Dorsolateral prefrontal cortex (tissue), 120 donors: ENCODE measurements at regions of chr5 and their contacts with region 1.

Region 1: GRCh38 chr5:128844354-128844923 is 120.8 kb upstream of the SLC27A6 start:
- DNase-seq: no peak
- H3K4me3 ChIP-seq: no peak overlapping the region
- H3K27ac ChIP-seq: no peak overlapping the region
- H3K27me3 ChIP-seq: no peaks in the 10 kb centered on the region
- CTCF ChIP-seq: peak; percentile 51 to 89 (median 67)

Region 2: DNA sequence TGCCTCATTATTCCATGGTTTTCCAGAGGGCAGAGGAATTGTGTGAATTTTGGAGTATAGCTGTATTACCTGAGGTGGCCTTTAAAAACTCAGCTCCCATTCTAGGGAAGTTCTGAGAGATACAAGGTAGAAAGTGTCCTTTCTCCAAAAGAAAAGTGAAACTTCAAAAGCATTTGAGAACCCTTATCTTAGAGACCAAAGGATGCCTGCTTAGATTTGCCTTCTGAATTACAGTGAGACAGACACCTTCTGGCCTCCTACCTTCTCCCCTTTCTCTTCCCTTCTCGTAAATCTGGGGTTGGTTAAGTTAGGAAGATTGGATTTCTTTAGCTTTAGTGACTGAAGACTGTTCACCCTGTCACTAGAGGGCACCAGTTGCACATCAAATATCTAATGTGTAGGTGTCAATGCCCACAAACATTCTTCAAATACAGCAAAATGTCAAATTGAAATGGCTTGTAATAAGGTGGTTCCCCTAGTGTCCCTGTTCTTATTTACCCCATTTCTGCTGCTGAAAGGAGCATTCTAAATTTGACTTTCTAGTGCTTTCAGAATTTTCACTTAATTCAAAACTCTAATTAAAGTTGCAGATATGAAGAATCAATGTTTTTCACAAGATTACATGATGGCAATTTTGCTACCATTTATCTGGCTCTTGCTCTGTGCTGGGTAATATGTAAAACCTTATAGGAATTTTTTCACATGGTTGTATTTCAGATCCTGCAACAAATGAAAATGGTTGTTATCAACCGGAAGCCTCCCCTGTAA is 1280.3 kb before region 1 on chr5:
- intact Hi-C with region 1: loop called (anchors 5 to 10 kb)
- DNase-seq: peak in 2 of 10 donors; percentile 24 to 52
- H3K4me3 ChIP-seq: no peak overlapping the region
- H3K27ac ChIP-seq: no peak overlapping the region
- H3K27me3 ChIP-seq: peaks cover 0 to 7% (median 0%) of the 10 kb centered on the region in 45 donors
- CTCF ChIP-seq: peak; percentile 46 to 85 (median 71)

Region 3: DNA sequence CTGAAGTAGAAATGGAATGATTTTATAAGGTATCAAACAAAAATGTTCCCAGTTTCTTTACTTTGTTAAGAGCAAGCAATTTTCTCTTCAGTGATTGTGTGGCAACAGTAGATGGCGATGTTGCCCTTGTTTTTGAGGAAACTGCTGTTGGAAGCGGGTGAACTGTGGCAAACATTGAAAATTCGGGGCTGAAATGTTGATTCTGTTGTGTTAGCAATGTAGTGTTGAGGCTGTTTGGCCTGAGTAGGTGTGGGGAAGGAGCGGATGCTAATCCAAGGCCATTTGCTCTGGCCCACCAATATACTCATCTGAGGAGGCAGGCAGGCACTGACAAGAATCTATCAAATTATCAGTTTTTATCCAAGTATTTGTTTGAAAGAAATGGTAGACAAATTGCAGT is 631.1 kb before region 1 on chr5:
- intact Hi-C with region 1: loop called (anchors 2 kb)
- DNase-seq: peak in 6 of 10 donors; percentile 28 to 67 (median 45)
- H3K4me3 ChIP-seq: no peak overlapping the region
- H3K27ac ChIP-seq: no peak overlapping the region
- H3K27me3 ChIP-seq: no peaks in the 10 kb centered on the region
- CTCF ChIP-seq: peak; percentile 50 to 95 (median 85)

Region 4: DNA sequence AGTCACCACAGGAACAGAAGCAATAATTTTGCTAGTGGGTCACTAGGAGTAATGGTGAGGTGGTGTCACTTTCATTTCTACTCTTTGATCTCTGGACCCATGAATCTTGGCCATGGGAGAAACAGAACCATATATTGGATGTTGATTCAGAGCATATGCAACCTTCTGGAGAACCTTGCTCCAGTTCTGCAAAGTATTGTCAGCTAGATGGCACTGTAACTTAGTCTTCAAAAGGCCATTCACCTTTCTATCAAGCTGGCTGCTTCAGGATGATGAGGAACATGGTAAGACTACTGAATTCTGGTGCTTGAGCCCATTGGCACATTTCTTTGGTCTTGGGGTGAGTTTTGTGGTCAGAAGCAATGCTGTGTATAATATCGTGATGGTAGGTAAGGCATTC is 177.3 kb before region 1 on chr5:
- intact Hi-C with region 1: loop called in 1 of 2 experiments (anchors 5 kb)
- DNase-seq: no peak
- H3K4me3 ChIP-seq: no peak overlapping the region
- H3K27ac ChIP-seq: no peak overlapping the region
- H3K27me3 ChIP-seq: peaks cover 0 to 7% (median 0%) of the 10 kb centered on the region in 45 donors
- CTCF ChIP-seq: peak in 48 of 56 donors; percentile 10 to 65 (median 39)

Region 5: GRCh38 chr5:128791312-128791711 is 53.1 kb before region 1 on chr5:
- intact Hi-C with region 1: no loop called
- DNase-seq: no peak
- H3K4me3 ChIP-seq: no peak overlapping the region
- H3K27ac ChIP-seq: no peak overlapping the region
- H3K27me3 ChIP-seq: no peaks in the 10 kb centered on the region
- CTCF ChIP-seq: no peak

Region 6: GRCh38 chr5:128920345-128921215 is 76.1 kb after region 1 on chr5:
- intact Hi-C with region 1: no loop called
- DNase-seq: no peak
- H3K4me3 ChIP-seq: no peak overlapping the region
- H3K27ac ChIP-seq: no peak overlapping the region
- H3K27me3 ChIP-seq: peaks cover 0 to 5% (median 0%) of the 10 kb centered on the region in 45 donors
- CTCF ChIP-seq: no peak